Esophagus squamous epithelium (tissue), 5 donors: ENCODE measurements at regions of chr14 and their contacts with region 1.

Region 1: GRCh38 chr14:95442633-95443021 is 73.8 kb downstream of the SYNE3 start:
- DNase-seq: peak; percentile 9
- H3K4me3 ChIP-seq: no peak overlapping the region
- H3K27ac ChIP-seq: no peak overlapping the region
- H3K4me1 ChIP-seq: peaks cover 0 to 9% (median 3%) of the 10 kb centered on the region in 3 donors
- H3K27me3 ChIP-seq: no peaks in the 10 kb centered on the region
- CTCF ChIP-seq: peak; percentile 58 to 80 (median 77)
- POLR2A ChIP-seq: no peak

Region 2: DNA sequence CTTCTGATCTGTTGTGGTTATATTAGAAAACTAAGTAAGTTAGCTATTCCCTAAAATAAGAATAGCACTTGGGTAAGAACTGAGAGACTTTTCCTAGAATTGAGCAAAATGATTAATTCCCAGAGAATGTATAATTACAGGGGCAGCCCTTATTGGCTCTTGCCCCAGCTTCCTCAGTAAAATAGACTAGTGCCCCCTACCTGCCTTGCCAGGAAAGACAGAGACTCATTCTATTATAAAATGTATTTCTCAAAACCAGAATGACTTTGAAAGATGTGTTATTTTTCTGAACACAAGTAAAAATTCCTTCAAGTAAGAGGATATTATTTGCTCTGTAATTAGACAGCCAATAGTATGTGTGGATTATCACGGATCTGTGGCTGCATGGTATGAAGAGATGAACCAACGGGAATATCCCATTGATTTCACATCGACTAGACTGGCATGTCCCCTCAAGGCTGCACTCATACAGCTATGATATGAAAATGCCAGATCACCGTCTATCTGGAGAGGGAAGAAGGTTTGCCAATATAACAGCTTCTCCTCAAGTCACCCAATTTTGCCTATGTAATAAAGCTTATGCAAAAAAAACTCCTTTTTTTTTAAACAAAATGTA is 84.9 kb after region 1 on chr14:
- intact Hi-C with region 1: loop called (anchors 5 kb)
- DNase-seq: no peak
- H3K4me3 ChIP-seq: no peak overlapping the region
- H3K27ac ChIP-seq: peak overlapping the region in 3 of 4 donors; percentile 65 to 76 (median 67)
- H3K4me1 ChIP-seq: peaks cover 21 to 82% (median 31%) of the 10 kb centered on the region in 3 donors
- H3K27me3 ChIP-seq: no peaks in the 10 kb centered on the region
- CTCF ChIP-seq: peak; percentile 61 to 80 (median 76)
- POLR2A ChIP-seq: no peak